GM12878 (cell line): ENCODE measurements at regions of chr4 and their contacts with region 1.

Region 1: DNA sequence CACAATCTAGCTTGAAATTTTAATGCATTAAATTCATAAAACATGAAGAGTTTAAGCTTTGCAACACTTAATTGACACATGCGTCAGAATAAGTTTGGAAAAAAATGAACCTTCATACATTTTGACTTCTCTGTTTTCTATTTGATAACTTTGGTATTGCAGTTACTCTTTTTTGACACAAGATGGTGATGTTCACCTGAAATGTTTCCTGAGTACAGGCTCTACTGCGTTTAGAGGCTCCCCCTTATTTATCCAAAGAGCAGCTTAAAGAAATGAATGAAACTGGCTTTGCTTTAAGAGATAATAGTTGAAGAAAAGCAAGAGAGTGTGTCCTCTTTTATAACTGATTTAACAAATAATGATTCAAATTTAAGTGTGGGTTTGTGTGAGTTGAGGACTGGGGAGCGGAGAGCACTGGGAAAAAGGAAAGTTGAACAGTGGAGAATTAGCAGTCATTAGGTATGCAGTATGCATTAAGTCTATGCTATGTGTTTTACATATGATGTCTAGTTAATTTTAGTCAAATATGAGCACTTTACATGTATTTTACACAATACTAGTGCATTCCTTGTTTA is 180.6 kb upstream of the NUDT6 start:
- DNase-seq: no peak
- ATAC-seq: peak; percentile 82
- H3K4me3 ChIP-seq: no peak overlapping the region
- H3K27ac ChIP-seq: no peak overlapping the region
- H3K4me1 ChIP-seq: no peaks in the 10 kb centered on the region
- H3K27me3 ChIP-seq: no peaks in the 10 kb centered on the region
- CTCF ChIP-seq: peak; percentile 58 to 71 (median 68); a peak in 5 of 6 replicates
- EP300 ChIP-seq: no peak
- POLR2A ChIP-seq: no peak
- RAD21 ChIP-seq: peak; percentile 82

Region 2: DNA sequence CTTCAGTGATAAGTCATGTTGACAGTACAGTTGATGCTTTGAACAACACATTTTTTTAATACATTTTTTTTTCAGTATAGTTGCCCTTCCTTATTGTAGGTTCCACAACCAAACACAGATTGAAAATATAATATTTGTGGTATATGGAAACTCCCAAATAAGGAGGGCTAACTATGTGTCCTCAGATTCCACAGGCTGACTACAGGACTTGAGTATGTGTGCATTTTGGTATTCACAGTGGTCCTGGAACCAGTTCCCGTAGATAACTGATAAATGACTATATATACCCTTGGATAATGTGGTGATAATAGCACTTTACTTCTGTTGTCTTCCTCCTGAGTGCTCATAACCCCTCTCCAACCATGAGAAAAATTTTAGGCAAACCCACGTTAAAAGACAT is 69.0 kb before region 1 on chr4:
- CTCF ChIA-PET with region 1: no interaction called
- POLR2A ChIA-PET with region 1: no interaction called
- RAD21 ChIA-PET with region 1: no interaction called
- SMC1A ChIA-PET with region 1: no interaction called
- in situ Hi-C with region 1: no loop called
- intact Hi-C with region 1: no loop called
- DNase-seq: no peak
- ATAC-seq: no peak
- H3K4me3 ChIP-seq: no peak overlapping the region
- H3K27ac ChIP-seq: no peak overlapping the region
- H3K4me1 ChIP-seq: no peaks in the 10 kb centered on the region
- H3K27me3 ChIP-seq: no peaks in the 10 kb centered on the region
- CTCF ChIP-seq: no peak
- EP300 ChIP-seq: no peak
- POLR2A ChIP-seq: no peak
- RAD21 ChIP-seq: no peak

Region 3: DNA sequence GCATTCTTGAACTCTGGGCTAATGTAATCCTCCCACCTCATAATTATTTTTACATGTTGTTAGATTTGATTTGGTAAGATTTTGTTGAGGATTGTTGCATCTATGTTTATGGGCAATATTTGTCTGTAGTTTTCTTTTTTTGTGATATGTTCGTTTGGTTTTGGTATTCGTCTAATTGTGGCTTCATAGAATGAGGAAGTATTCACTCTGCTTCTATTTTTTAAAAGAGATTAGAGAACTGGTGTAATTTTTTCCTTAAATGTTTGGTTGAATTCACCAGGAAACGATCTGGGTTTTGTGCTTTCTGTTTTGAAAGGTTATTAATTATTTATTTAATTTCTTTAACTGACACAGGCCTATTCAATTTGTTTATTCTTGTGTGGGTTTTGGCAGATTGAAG is 19.3 kb before region 1 on chr4:
- CTCF ChIA-PET with region 1: no interaction called
- POLR2A ChIA-PET with region 1: no interaction called
- RAD21 ChIA-PET with region 1: interaction called, 3 read pairs
- SMC1A ChIA-PET with region 1: interaction called, 14 read pairs
- in situ Hi-C with region 1: no loop called
- intact Hi-C with region 1: no loop called
- DNase-seq: no peak
- ATAC-seq: no peak
- H3K4me3 ChIP-seq: no peak overlapping the region
- H3K27ac ChIP-seq: no peak overlapping the region
- H3K4me1 ChIP-seq: no peaks in the 10 kb centered on the region
- H3K27me3 ChIP-seq: no peaks in the 10 kb centered on the region
- CTCF ChIP-seq: no peak
- EP300 ChIP-seq: no peak
- POLR2A ChIP-seq: no peak
- RAD21 ChIP-seq: no peak

Region 4: DNA sequence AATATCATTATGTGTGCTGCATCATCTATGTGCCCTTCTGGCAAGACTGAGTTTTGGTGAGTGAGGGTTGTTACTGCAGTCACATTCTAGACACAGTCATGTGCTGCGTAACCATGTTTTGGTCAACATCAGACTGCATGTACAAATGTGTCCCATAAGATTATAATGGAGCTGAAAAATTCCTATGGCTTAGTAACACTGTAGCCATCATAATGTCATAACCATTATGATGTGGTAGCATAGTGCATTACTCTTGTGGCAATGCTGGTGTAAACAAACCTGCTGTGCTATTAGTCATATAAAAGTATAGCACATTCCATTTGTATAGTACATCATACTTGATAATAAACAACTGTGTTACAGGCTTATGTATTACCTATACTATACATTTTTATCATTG is 17.5 kb after region 1 on chr4:
- CTCF ChIA-PET with region 1: no interaction called
- POLR2A ChIA-PET with region 1: no interaction called
- RAD21 ChIA-PET with region 1: no interaction called
- SMC1A ChIA-PET with region 1: no interaction called
- in situ Hi-C with region 1: no loop called
- intact Hi-C with region 1: no loop called
- DNase-seq: no peak
- ATAC-seq: no peak
- H3K4me3 ChIP-seq: no peak overlapping the region
- H3K27ac ChIP-seq: no peak overlapping the region
- H3K4me1 ChIP-seq: no peaks in the 10 kb centered on the region
- H3K27me3 ChIP-seq: no peaks in the 10 kb centered on the region
- CTCF ChIP-seq: no peak
- EP300 ChIP-seq: no peak
- POLR2A ChIP-seq: no peak
- RAD21 ChIP-seq: no peak

Region 5: DNA sequence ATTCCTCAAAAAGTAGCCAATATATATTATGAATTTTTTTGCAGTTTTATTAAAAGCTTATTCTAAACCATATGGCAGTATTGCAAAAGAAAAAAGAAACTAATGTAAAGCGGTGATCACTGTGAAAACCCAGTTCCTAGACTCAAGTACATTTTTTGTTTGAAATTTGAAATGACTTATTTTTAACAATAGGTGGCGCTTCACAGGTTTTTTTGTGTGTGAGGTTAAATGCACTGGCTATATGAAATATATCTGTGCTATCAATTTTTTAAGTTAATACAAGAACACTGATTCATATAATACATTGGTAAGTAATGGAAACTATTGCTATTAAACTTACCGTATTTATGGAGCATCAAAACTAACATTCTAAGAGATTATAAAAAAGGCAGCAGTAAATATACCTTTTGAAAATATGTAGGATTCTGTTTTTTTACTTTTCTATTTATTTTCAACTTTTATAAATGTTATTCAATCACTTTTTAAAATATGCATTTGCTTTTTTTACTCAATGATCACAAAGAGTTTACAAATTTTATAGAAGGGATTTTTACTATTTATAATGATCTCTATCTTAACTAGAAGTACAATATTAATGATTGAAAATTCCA is 288.0 kb after region 1 on chr4:
- CTCF ChIA-PET with region 1: interaction called, 31 read pairs
- POLR2A ChIA-PET with region 1: no interaction called
- RAD21 ChIA-PET with region 1: interaction called, 3 read pairs
- SMC1A ChIA-PET with region 1: interaction called, 5 read pairs
- in situ Hi-C with region 1: no loop called
- intact Hi-C with region 1: loop called (anchors 5 kb)
- DNase-seq: no peak
- ATAC-seq: peak; percentile 70
- H3K4me3 ChIP-seq: no peak overlapping the region
- H3K27ac ChIP-seq: no peak overlapping the region
- H3K4me1 ChIP-seq: no peaks in the 10 kb centered on the region
- H3K27me3 ChIP-seq: no peaks in the 10 kb centered on the region; a peak in 2 of 4 replicates
- CTCF ChIP-seq: peak; percentile 33 to 52 (median 46); a peak in 5 of 6 replicates
- EP300 ChIP-seq: no peak
- POLR2A ChIP-seq: no peak
- RAD21 ChIP-seq: peak; percentile 60

Region 6: DNA sequence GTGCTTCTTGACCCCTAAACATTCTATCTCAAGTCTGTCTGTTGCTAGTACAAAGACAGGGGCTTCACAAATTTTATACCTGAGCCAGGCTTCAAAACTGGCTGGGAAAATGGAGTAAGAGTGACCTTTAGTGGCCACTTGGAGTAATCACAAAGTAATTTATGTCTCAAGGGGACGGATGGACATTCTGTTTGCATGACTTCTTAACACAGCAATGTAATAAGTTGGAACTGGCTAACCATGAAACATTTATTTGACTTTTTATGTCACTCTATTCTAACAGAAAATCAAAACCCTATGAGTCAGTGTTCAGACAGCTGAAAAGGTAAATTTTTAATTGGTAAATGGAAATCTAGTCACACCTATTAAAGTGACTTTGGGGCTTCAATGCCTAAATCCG is 1008.9 kb after region 1 on chr4:
- CTCF ChIA-PET with region 1: no interaction called
- POLR2A ChIA-PET with region 1: no interaction called
- RAD21 ChIA-PET with region 1: no interaction called
- SMC1A ChIA-PET with region 1: no interaction called
- in situ Hi-C with region 1: loop called (anchors 25 kb)
- intact Hi-C with region 1: loop called (anchors 5 kb)
- DNase-seq: no peak
- ATAC-seq: peak; percentile 65
- H3K4me3 ChIP-seq: no peak overlapping the region
- H3K27ac ChIP-seq: no peak overlapping the region
- H3K4me1 ChIP-seq: no peaks in the 10 kb centered on the region
- H3K27me3 ChIP-seq: no peaks in the 10 kb centered on the region
- CTCF ChIP-seq: peak; percentile 18 to 60 (median 32); a peak in 4 of 6 replicates
- EP300 ChIP-seq: no peak
- POLR2A ChIP-seq: no peak
- RAD21 ChIP-seq: peak; percentile 74

Region 7: GRCh38 chr4:124262211-124263179 is 1159.5 kb after region 1 on chr4:
- CTCF ChIA-PET with region 1: interaction called, 3 read pairs
- POLR2A ChIA-PET with region 1: no interaction called
- RAD21 ChIA-PET with region 1: no interaction called
- SMC1A ChIA-PET with region 1: no interaction called
- in situ Hi-C with region 1: no loop called
- intact Hi-C with region 1: loop called (anchors 5 kb)
- DNase-seq: peak; percentile 11
- ATAC-seq: peak; percentile 88
- H3K4me3 ChIP-seq: no peak overlapping the region
- H3K27ac ChIP-seq: no peak overlapping the region
- H3K4me1 ChIP-seq: no peaks in the 10 kb centered on the region
- H3K27me3 ChIP-seq: no peaks in the 10 kb centered on the region
- CTCF ChIP-seq: peak; percentile 69 to 82 (median 74)
- EP300 ChIP-seq: no peak
- POLR2A ChIP-seq: no peak
- RAD21 ChIP-seq: peak; percentile 90

Region 8: DNA sequence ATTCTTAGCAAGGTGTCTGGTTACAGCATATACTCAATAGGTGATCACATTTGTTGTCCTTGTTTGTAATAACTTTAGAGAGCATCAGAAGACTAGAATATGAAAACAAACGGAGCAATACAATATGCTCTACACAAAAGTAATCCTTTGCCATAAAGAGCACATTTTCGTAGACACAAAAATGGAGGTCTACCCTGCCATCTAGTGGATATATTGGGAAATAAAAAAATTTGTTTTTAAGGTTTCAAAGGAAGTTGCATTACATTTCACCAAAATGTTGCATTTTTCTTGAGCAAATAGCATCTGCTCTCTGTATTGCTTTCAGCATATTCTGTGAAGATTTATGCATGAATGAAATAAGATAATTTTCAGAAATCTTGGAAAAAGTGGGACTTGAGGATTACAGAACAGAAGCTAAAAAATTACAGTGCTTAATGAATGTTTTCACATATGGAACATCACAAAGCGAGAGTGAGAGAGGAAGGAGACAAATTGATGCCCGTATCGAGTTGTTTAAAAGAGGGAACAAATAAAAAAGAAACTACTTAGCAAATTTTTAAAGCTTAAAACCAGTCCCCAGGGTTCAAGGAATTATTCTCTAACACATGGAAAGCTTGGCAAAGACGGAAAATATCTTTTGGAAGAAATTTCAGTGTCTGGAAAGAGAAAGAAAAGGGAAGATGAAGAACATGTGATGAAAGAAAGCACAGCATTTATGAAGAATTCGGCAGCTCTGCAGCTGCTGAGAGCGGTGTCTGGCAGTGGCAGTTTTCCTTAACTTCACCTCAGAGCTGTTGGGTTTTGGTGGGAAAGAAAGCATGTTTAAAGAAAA is 1219.5 kb after region 1 on chr4:
- CTCF ChIA-PET with region 1: interaction called, 6 read pairs
- POLR2A ChIA-PET with region 1: no interaction called
- RAD21 ChIA-PET with region 1: no interaction called
- SMC1A ChIA-PET with region 1: no interaction called
- in situ Hi-C with region 1: no loop called
- intact Hi-C with region 1: loop called (anchors 5 kb)
- DNase-seq: no peak
- ATAC-seq: peak; percentile 20; the same call in 1 of the 3 replicates
- H3K4me3 ChIP-seq: no peak overlapping the region
- H3K27ac ChIP-seq: no peak overlapping the region
- H3K4me1 ChIP-seq: no peaks in the 10 kb centered on the region
- H3K27me3 ChIP-seq: no peaks in the 10 kb centered on the region
- CTCF ChIP-seq: peak in 2 of 3 experiments; percentile 51 to 53; a peak in 4 of 6 replicates
- EP300 ChIP-seq: no peak
- POLR2A ChIP-seq: no peak
- RAD21 ChIP-seq: peak; percentile 44